PC-3 (cell line): ENCODE measurements at regions of chr21 and their contacts with region 1.

Region 1: GRCh38 chr21:42258153-42258884 is 39.4 kb downstream of the ABCG1 start:
- DNase-seq: peak; percentile 60
- ATAC-seq: peak; percentile 45; the same call in 1 of the 2 replicates
- H3K4me3 ChIP-seq: no peak overlapping the region
- H3K27ac ChIP-seq: no peak overlapping the region
- H3K4me1 ChIP-seq: peaks cover 10% of the 10 kb centered on the region
- H3K27me3 ChIP-seq: no peaks in the 10 kb centered on the region; the same call in 1 of the 2 replicates
- CTCF ChIP-seq: peak; percentile 92

Region 2: DNA sequence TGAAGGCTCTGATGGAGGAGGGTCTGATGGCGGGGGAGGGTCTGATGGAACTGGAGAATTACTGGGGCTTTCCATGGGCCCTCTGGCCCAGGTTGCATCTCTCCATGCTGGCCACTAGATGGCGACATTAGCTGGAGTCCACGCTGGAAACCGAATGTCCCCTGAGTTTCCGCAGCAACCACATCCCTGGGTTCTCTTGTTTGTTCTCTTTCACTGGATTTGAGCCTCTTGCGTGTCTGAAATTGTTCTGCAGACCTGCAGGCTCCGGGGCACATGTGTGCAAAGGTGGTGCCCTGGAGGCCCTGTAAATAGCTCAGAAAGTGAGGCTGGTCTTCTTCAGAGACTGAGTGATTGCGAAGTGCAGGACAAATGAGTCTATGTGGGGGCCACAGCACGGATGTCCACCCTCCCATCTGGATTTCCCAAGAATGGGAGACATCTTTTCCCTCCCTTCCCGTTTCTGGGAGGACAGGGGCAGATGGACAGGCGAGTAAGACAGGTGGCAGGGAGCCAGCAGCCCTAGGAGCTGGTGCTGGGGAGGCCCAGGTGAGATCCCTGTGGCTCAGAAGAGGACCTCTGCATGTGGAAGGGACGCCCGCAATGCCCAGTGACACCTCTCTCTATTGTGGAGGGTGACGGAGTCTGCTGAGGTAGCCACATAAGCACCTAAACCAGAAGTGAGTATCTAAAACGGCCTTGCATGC is 112.6 kb before region 1 on chr21:
- CTCF ChIA-PET with region 1: interaction called, 13 read pairs
- POLR2A ChIA-PET with region 1: no interaction called
- intact Hi-C with region 1: loop called (anchors 1 kb)
- DNase-seq: peak; percentile 77
- ATAC-seq: peak; percentile 92
- H3K4me3 ChIP-seq: no peak overlapping the region
- H3K27ac ChIP-seq: no peak overlapping the region
- H3K4me1 ChIP-seq: no peaks in the 10 kb centered on the region
- H3K27me3 ChIP-seq: no peaks in the 10 kb centered on the region
- CTCF ChIP-seq: peak; percentile 95

Region 3: DNA sequence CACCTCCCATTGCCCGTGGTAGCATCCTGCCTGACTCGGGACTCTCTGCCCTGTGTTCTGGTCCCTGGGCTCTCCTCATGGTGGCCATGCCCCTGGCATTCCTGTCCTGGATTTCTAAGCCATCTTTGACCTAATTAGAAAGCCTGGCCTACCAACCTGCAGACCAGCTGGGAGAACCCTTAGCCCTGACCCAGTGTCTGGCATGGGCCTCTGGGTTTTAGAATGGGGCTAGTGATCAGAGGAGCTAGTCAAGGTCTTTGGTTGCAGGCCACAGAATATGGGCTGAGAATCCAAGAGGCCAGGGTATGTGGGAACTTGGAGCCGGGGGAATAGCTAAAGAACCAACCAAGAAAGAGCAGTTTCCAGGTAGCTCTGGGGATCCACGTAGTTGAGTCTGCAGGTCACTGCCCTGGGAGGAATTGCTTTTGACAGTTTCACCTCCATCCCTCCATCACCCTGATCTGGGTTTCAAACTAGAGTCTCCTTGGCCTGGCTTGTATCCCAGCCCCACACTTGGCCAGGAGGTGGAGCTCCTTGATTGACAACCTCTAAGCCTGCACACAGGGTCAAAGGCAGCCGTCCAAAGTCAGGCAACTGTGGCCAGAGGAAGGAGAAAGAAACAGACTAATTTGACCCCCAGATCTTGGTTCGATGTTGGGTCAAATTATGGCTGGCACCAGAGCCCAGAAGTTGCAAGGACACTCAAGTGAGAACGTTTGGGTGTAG is 94.1 kb before region 1 on chr21:
- CTCF ChIA-PET with region 1: no interaction called
- POLR2A ChIA-PET with region 1: no interaction called
- intact Hi-C with region 1: loop called (anchors 1 kb)
- DNase-seq: peak; percentile 44
- ATAC-seq: peak; percentile 79
- H3K4me3 ChIP-seq: no peak overlapping the region
- H3K27ac ChIP-seq: no peak overlapping the region
- H3K4me1 ChIP-seq: 0 out of 2 replicates have a peak, but pooled peaks cover 3% of the 10 kb centered on the region
- H3K27me3 ChIP-seq: no peaks in the 10 kb centered on the region
- CTCF ChIP-seq: peak; percentile 75

Region 4: DNA sequence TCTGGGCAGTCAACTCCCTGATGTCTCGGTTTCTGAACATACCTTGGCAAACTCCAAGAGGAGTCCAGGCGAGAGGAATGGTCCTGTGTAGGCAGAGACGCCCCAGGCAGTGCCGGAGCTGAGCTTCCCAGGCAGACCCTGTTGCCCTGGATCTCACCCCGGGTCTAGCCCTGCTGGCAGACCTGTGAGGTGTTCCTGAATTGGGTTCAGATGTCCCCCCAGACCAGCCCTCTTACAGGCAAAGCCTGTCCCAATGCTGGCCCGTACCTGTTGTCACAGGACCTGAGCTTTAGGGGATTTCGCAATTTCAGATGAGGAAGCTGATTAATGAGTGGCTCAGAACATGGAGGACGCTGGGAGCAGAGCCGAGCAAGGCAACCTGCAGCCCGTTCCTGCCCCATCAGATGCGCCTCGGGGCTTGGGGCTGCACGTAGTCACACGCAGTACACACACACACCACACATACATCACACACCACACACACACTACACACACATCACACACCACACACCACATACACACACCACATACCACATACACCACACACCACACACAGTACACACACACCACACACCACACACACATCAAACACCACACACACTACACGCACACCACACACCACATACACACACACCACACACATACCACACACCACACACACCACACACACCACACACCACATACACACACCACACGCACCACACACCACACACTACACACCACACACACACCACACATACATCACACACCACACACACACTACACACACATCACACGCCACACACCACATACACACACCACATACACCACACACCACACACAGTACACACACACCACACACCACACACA is 356.7 kb after region 1 on chr21:
- CTCF ChIA-PET with region 1: no interaction called
- POLR2A ChIA-PET with region 1: no interaction called
- intact Hi-C with region 1: no loop called
- DNase-seq: peak; percentile 75
- ATAC-seq: peak; percentile 50
- H3K4me3 ChIP-seq: no peak overlapping the region
- H3K27ac ChIP-seq: no peak overlapping the region
- H3K4me1 ChIP-seq: 0 out of 2 replicates have a peak, but pooled peaks cover 4% of the 10 kb centered on the region
- H3K27me3 ChIP-seq: peaks cover 39% of the 10 kb centered on the region
- CTCF ChIP-seq: no peak